Naive thymus-derived CD4-positive, alpha-beta T cell (primary cell): ENCODE measurements at regions of chr9 and their contacts with region 1.

Region 1: DNA sequence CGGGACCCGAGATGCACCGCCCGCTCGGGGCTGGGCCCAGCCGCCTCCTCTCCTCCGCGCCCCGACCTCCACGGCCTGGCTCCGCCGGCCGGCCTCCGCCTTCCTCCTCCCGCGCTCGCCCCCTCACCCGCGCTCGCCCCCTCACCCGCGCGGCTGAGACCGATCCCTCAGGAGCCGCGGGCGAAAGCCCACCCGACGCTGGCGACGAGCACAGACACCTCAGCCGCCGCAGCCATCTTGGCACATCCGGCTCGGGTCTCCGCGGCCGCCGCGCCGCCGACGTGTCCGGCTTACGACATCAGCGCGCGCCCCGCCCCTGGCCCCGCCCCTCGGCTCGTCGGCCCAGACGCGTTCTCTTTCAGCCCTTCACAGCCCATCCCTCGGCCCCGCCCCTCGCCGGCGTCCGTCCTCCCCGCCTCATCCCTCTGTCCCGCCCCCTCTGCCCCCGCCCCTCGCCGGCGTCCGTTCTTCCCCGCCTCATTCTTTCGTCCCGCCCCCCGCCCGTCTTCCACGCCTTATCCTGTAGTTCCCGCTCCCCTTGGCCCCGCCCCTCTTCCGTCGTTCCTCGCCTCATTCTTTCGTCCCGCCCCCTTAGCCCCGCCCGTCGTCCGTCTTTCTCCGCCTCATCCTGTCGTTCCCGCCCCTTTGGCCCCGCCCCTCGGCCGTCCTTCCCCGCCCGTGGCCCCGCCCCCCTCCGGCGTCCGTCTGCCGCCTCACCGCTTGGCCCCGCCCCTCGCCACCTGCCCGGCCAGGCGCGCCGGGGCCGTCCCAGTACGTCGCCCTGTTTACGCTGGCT is at the start of gene SEC16A:
- DNase-seq: peak; percentile 97 to 100 (median 99)
- ATAC-seq: peak; percentile 85
- H3K4me3 ChIP-seq: peak within 1 kb of the TSS; percentile 93
- H3K4me3 Mint-ChIP-seq: peak within 1 kb of the TSS; percentile 86 to 99 (median 97)
- H3K27ac ChIP-seq: peak within 1 kb of the TSS; percentile 97
- H3K27ac Mint-ChIP-seq: peak within 1 kb of the TSS; percentile 86 to 99 (median 98)
- H3K4me1 ChIP-seq: peaks cover 17 to 30% of the 10 kb centered on the region in 2 donors
- H3K4me1 Mint-ChIP-seq: peaks cover 20 to 47% (median 39%) of the 10 kb centered on the region in 7 donors
- H3K27me3 ChIP-seq: no peaks in the 10 kb centered on the region
- H3K27me3 Mint-ChIP-seq: no peaks in the 10 kb centered on the region
- total RNA-seq, gene SEC16A: 79.8 to 88.5 (median 86.1) TPM

Region 2: DNA sequence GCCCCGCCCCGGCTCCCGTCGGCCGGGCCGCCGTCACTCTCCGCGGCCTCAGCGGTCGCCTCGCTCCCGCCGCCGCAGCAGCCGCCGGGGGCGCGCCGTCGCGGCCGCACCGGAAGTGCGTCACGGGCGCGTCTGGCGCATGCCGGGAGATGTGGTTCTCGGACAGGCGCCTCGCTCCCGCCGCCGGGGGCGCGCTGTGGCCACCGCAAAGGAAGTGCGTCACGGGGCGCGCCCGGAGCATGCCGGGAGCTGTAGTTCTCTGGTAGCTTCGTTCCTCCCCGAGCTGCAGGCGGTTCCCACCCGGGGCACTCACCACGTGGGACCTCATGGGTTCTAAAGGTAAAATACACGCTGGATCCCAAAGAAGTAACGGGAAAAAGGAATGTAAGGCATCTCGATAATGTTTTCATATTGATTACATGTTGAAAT is 521.7 kb before region 1 on chr9 and contains the start of gene UBAC1:
- CTCF ChIA-PET with region 1: no interaction called
- POLR2A ChIA-PET with region 1: no interaction called
- intact Hi-C with region 1: loop called in 1 of 2 experiments (anchors 5 kb)
- DNase-seq: peak; percentile 91 to 96 (median 94)
- ATAC-seq: peak; percentile 97
- H3K4me3 ChIP-seq: peak within 1 kb of the TSS; percentile 65
- H3K4me3 Mint-ChIP-seq: peak within 1 kb of the TSS; percentile 78 to 93 (median 88)
- H3K27ac ChIP-seq: peak within 1 kb of the TSS; percentile 82
- H3K27ac Mint-ChIP-seq: peak within 1 kb of the TSS; percentile 74 to 94 (median 83)
- H3K4me1 ChIP-seq: peaks cover 15 to 16% of the 10 kb centered on the region in 2 donors
- H3K4me1 Mint-ChIP-seq: peaks cover 20 to 39% (median 30%) of the 10 kb centered on the region in 7 donors
- H3K27me3 ChIP-seq: no peaks in the 10 kb centered on the region
- H3K27me3 Mint-ChIP-seq: peaks cover 0 to 15% (median 0%) of the 10 kb centered on the region in 5 donors
- total RNA-seq, gene UBAC1: 28.6 to 36.1 (median 32.2) TPM

Region 3: GRCh38 chr9:136363606-136364370 is 119.2 kb before region 1 on chr9 and contains the start of gene DNLZ:
- CTCF ChIA-PET with region 1: no interaction called
- POLR2A ChIA-PET with region 1: interaction called, 4 read pairs
- intact Hi-C with region 1: loop called (anchors 1 kb)
- DNase-seq: peak; percentile 71 to 93 (median 90)
- ATAC-seq: peak; percentile 88
- H3K4me3 ChIP-seq: peak within 1 kb of the TSS; percentile 70
- H3K4me3 Mint-ChIP-seq: peak within 1 kb of the TSS; percentile 65 to 88 (median 84)
- H3K27ac ChIP-seq: peak within 1 kb of the TSS; percentile 75
- H3K27ac Mint-ChIP-seq: peak within 1 kb of the TSS; percentile 62 to 91 (median 75)
- H3K4me1 ChIP-seq: peaks cover 0 to 5% of the 10 kb centered on the region in 2 donors
- H3K4me1 Mint-ChIP-seq: peaks cover 0 to 6% (median 0%) of the 10 kb centered on the region in 7 donors
- H3K27me3 ChIP-seq: no peaks in the 10 kb centered on the region
- H3K27me3 Mint-ChIP-seq: no peaks in the 10 kb centered on the region
- total RNA-seq, gene DNLZ: 17.2 to 27.5 (median 24.8) TPM

Region 4: DNA sequence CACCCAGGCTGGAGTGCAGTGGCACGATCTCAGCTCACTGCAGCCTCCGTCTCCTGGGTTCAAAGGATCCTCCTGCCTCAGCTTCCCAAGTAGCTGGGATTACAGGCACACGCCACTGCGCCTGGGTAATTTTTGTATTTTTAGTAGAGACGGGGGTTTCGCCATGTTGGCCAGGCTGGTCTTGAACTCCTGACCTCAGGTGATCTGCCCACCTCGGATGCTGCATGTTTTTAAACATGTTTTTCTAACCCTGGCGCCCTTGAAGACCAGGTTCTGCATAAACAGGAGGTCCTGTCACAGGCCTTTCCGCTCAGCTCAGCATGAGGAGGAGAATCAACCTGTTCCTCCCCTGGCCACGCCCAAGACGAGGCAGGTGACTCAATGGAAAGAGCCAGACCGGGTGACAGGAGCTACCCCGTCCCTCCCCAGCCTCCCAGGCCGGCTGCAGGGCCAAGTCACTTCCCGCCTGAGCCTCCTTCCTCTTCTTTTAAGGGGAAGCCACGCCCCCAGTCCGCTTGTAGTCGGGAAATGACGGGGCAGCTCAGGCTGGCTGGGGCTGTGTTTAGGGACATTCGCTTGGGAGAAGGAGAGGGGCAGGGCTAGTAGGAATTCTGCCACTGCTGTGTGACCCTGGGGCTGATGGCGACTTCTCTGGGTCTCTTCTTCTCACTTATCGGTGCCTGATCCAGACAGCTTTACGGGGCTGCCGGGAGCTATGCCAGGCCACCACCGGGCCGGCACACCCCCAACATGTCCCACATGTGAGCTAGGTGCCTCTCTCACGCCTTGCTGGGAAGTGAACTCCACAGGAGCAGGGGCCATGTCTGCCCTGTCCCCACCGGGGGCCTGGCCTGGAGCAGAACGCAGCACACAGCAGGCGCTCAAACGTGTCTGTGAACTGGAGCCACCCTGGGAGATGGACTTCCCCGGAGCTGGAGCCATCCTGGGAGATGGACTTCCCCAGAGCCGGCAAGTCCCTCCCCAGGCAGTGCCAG is 56.7 kb after region 1 on chr9:
- CTCF ChIA-PET with region 1: interaction called, 17 read pairs
- POLR2A ChIA-PET with region 1: interaction called, 6 read pairs
- intact Hi-C with region 1: loop called (anchors 1 kb)
- DNase-seq: peak; percentile 50 to 92 (median 80)
- ATAC-seq: peak; percentile 79
- H3K4me3 ChIP-seq: peak overlapping the region; percentile 65
- H3K4me3 Mint-ChIP-seq: peak overlapping the region; percentile 78 to 97 (median 85)
- H3K27ac ChIP-seq: peak overlapping the region; percentile 80
- H3K27ac Mint-ChIP-seq: peak overlapping the region; percentile 90 to 99 (median 99)
- H3K4me1 ChIP-seq: peaks cover 61 to 70% of the 10 kb centered on the region in 2 donors
- H3K4me1 Mint-ChIP-seq: peaks cover 24 to 73% (median 48%) of the 10 kb centered on the region in 7 donors
- H3K27me3 ChIP-seq: no peaks in the 10 kb centered on the region
- H3K27me3 Mint-ChIP-seq: no peaks in the 10 kb centered on the region

Region 5: GRCh38 chr9:136671646-136672430 is 188.8 kb after region 1 on chr9:
- CTCF ChIA-PET with region 1: no interaction called
- POLR2A ChIA-PET with region 1: no interaction called
- intact Hi-C with region 1: loop called in 1 of 2 experiments (anchors 1 kb)
- DNase-seq: peak in 4 of 9 donors; percentile 31 to 57 (median 42)
- ATAC-seq: peak; percentile 55
- H3K4me3 ChIP-seq: no peak overlapping the region
- H3K4me3 Mint-ChIP-seq: no peak overlapping the region
- H3K27ac ChIP-seq: no peak overlapping the region
- H3K27ac Mint-ChIP-seq: no peak overlapping the region
- H3K4me1 ChIP-seq: no peaks in the 10 kb centered on the region
- H3K4me1 Mint-ChIP-seq: no peaks in the 10 kb centered on the region
- H3K27me3 ChIP-seq: no peaks in the 10 kb centered on the region
- H3K27me3 Mint-ChIP-seq: peaks cover 0 to 4% (median 0%) of the 10 kb centered on the region in 5 donors

Region 6: GRCh38 chr9:136784249-136784996 is 301.4 kb after region 1 on chr9:
- CTCF ChIA-PET with region 1: no interaction called
- POLR2A ChIA-PET with region 1: no interaction called
- intact Hi-C with region 1: loop called in 1 of 2 experiments (anchors 1 kb)
- DNase-seq: no peak
- ATAC-seq: no peak
- H3K4me3 ChIP-seq: no peak overlapping the region
- H3K4me3 Mint-ChIP-seq: no peak overlapping the region
- H3K27ac ChIP-seq: no peak overlapping the region
- H3K27ac Mint-ChIP-seq: no peak overlapping the region
- H3K4me1 ChIP-seq: no peaks in the 10 kb centered on the region
- H3K4me1 Mint-ChIP-seq: peaks cover 5 to 18% (median 8%) of the 10 kb centered on the region in 7 donors
- H3K27me3 ChIP-seq: no peaks in the 10 kb centered on the region
- H3K27me3 Mint-ChIP-seq: peaks cover 0 to 50% (median 0%) of the 10 kb centered on the region in 5 donors

Region 7: GRCh38 chr9:136991993-136992818 is 509.2 kb after region 1 on chr9 and contains the start of gene PAXX:
- CTCF ChIA-PET with region 1: no interaction called
- POLR2A ChIA-PET with region 1: no interaction called
- intact Hi-C with region 1: loop called in 1 of 2 experiments (anchors 2 kb)
- DNase-seq: peak; percentile 90 to 99 (median 93)
- ATAC-seq: peak; percentile 96
- H3K4me3 ChIP-seq: peak within 1 kb of the TSS; percentile 74
- H3K4me3 Mint-ChIP-seq: peak within 1 kb of the TSS; percentile 76 to 90 (median 86)
- H3K27ac ChIP-seq: peak within 1 kb of the TSS; percentile 81
- H3K27ac Mint-ChIP-seq: peak within 1 kb of the TSS; percentile 48 to 89 (median 88)
- H3K4me1 ChIP-seq: peaks cover 17 to 23% of the 10 kb centered on the region in 2 donors
- H3K4me1 Mint-ChIP-seq: peaks cover 0 to 25% (median 15%) of the 10 kb centered on the region in 7 donors
- H3K27me3 ChIP-seq: no peaks in the 10 kb centered on the region
- H3K27me3 Mint-ChIP-seq: peaks cover 5 to 22% (median 5%) of the 10 kb centered on the region in 5 donors
- total RNA-seq, gene PAXX: 54.8 to 78.2 (median 68.0) TPM